ENCODE measurements at regions of chr1 and their contacts with region 1.

Region 1: DNA sequence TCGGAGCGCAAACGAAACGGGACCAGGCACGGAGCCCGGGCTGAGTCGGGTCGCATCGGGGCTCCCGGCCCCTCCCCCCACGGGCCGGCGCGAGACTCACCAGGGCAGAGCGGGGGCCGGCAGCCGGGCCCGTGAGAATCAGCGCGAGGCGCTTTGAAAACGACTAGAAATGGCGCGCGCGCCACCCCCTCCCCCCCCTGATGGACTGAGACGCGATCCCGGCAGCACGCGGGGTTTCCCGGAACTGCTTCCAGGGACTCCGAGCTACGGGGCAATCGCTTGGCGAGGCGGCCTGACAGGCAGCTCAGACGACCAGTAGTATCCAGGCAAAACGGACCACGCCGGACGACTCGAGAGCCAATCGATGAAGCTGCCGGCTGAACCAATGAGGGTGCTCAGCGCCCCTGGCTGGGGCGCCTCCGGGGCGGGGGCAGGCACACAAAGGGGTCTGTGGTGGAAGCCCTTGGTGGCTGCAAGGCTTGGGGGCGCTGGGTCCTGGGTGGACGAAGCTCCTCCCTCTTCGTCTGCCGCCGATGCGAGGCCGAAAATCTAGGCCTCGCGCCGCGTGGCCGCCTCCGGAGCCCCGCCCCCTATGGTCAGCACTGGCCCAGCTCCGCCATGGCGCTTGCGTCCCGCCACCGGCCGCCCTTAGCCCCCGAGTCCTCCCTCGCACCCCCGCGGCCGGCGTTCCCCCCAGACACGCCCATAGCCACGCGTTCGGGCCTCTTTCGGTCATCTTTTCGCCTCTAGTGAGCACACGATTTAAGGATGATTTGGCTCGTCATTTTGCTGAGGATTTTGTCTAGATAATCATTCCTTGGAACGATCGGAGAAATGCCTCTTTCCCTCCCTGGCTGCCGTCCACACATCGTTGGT is at the start of gene HNRNPR:
- DNase-seq: peak; percentile 98 to 100
- H3K4me3 ChIP-seq: peak within 1 kb of the TSS; percentile 94 to 95
- H3K27ac ChIP-seq: peak within 1 kb of the TSS; percentile 97 to 100
- H3K4me1 ChIP-seq: peaks cover 10 to 26% of the 10 kb centered on the region in 2 donors
- H3K27me3 ChIP-seq: no peaks in the 10 kb centered on the region
- CTCF ChIP-seq: peak in 1 of 3 experiments; percentile 7
- total RNA-seq, gene HNRNPR: 21.5 TPM

Region 2: DNA sequence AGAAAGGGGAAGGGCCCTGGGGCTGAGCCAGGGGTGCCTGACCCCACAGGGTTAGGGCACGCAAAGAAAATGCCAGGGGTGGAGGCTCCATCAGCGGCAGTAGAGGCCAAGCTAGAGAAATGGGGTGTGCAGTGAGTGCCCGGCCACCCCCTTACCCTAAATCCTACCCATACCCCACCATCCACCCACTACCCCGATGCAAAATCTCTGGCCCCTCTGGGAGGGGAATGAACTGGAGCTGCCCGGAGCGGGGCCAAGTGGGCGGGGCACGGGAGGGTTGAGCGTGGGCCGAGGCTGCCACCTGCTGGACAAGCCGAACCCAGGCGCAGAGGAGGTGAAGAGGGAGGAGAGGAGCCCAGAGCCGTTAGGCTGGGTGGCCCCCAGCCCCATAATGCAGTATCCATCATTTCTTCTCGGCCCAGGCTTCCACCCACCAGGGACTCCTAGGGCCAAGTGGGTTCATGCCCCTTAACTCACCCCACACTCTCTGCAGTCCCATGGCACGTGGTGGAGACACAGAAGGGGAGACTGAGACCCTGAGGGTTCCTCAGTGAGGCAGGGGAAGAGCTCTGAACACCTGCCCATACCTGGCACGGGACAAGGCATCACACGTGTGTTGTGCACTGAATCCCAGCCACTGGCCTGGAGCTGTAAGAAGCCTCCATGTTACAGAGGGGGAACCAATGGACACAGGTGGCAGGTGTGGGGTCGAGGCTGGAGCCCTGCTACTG is 702.3 kb before region 1 on chr1:
- intact Hi-C with region 1: no loop called
- DNase-seq: peak in 1 of 2 donors; percentile 83
- H3K4me3 ChIP-seq: no peak overlapping the region
- H3K27ac ChIP-seq: no peak overlapping the region
- H3K4me1 ChIP-seq: no peaks in the 10 kb centered on the region
- H3K27me3 ChIP-seq: no peaks in the 10 kb centered on the region
- CTCF ChIP-seq: peak; percentile 83 to 94 (median 93)

Region 3: DNA sequence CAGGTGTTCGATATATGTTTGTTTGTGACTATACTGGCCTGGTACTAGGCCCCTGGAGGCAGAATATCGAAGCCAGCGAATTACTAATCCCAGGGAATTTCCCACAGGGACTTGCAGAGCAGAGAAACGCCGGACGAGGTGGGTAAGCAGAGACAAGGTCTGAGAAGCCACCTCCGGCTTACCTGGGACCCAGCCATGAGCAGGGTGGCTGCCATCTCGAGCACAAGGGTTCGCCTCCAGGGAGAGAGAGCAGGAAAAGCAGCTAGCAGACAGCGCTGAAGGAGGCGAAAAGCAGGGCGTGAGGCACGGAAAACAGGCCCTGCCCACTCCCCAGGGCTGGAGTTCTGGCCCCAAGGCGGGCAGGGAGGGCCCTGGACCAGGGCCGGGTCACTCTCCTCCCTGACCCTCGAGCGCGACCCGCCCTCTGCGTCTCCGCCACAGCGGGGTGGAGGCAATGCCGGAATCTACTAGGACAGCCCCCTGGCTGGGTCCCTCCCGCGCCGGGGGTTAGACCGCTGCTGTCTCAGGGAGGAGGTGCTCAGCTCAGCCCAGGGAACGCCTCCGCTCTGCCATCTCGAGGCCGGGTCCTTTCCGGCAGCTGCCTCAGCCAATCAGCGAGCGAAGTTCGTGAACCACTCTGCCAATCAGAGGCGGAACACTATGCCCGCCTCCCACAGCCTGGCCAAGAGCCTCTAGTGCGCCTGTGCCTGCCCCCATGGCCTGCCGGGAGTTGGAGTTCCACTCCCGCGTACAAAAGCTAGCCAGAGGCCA is 23.6 kb after region 1 on chr1:
- intact Hi-C with region 1: loop called (anchors 1 kb)
- DNase-seq: peak; percentile 96 to 99
- H3K4me3 ChIP-seq: peak overlapping the region; percentile 76 to 78
- H3K27ac ChIP-seq: peak overlapping the region; percentile 98
- H3K4me1 ChIP-seq: peaks cover 9 to 26% of the 10 kb centered on the region in 2 donors
- H3K27me3 ChIP-seq: no peaks in the 10 kb centered on the region
- CTCF ChIP-seq: no peak

Region 4: DNA sequence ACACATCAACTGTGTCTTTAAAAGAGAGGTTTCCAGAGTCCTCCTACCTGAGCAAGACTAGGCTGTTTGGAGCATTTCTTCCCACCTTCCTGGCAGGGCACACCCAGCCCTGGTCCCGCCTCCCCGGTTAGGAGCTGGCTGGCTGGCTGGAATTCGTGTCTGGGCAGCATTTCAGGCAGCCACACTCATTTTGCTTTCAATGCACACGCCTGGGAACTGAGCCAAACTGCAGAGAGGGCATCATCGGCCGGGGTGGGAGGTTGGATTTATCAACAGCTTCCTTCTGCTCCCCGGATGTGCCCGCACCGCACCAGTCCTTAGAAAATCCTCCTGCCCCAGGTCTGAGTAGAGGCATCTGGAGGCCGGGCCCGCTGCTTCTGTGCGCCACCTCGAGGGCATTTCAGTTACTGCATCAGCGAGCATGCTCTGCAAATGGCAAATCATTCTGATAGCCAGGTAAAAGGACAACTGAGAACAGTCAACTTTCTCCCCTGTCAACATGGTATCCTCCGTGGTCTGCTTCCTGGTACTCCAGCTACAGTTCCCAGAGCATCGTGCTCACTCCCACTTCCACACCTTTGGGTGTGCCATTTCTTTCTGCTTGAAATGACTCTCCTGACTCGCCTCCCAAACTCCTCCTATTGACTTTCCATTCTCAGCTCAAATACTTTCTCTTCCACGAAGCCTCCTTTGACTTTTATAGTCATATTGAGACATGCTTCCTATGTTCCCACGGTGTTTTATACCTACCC is 59.6 kb after region 1 on chr1:
- intact Hi-C with region 1: loop called (anchors 1 kb)
- DNase-seq: peak; percentile 53 to 92
- H3K4me3 ChIP-seq: peak overlapping the region in 1 of 2 donors; percentile 39
- H3K27ac ChIP-seq: peak overlapping the region; percentile 47 to 68
- H3K4me1 ChIP-seq: peaks cover 3 to 16% of the 10 kb centered on the region in 2 donors
- H3K27me3 ChIP-seq: no peaks in the 10 kb centered on the region
- CTCF ChIP-seq: peak; percentile 88 to 98 (median 98)

Region 5: GRCh38 chr1:23422241-23423030 is 78.1 kb after region 1 on chr1:
- intact Hi-C with region 1: loop called (anchors 5 kb)
- DNase-seq: peak; percentile 39 to 86
- H3K4me3 ChIP-seq: peak overlapping the region; percentile 30 to 91
- H3K27ac ChIP-seq: peak overlapping the region; percentile 85 to 86
- H3K4me1 ChIP-seq: peaks cover 0 to 23% of the 10 kb centered on the region in 2 donors
- H3K27me3 ChIP-seq: no peaks in the 10 kb centered on the region
- CTCF ChIP-seq: no peak

Region 6: DNA sequence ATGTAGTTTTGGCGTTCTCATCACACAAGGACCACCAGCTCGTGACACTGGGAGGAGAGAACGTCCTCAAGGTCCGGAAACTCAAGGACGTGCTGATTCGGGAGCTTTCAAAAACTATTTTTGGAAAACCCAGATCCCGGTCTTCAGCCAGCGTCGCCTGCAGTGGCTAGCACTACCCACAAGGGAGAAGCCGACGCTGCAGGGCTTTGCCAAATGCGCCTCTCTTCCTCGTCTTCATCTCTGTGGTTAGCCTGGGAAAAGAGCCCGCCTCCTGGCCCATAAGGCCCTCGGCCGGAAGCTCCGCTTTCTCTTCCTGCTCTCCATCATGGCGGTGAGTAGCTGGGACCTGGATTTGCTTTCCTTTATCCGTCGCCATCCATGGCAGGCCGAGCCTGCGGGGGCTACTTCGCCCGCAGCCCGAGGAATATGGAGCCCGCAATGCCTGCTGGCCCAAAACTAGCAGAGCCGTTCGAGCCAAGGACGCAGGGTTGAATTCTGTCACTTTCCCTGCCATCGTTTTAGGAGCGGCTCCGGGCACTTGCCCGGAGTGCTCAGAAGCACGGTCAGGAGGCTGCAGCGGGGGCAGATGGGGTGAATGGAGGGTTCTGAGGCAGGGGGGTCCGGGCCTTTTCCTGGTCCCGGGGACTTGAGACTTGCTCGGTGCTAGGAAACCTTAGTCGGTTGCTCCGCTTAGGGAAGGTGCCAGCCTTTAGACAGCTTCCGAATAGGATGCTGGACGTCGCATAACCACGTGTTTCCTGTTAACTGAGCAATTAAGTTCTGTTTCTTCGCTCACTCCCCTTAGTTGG is 347.4 kb after region 1 on chr1 and contains the start of gene RPL11:
- intact Hi-C with region 1: loop called (anchors 5 kb)
- DNase-seq: peak; percentile 65 to 96
- H3K4me3 ChIP-seq: peak within 1 kb of the TSS; percentile 74 to 82
- H3K27ac ChIP-seq: peak within 1 kb of the TSS; percentile 80 to 88
- H3K4me1 ChIP-seq: peaks cover 8 to 17% of the 10 kb centered on the region in 2 donors
- H3K27me3 ChIP-seq: no peaks in the 10 kb centered on the region
- CTCF ChIP-seq: peak; percentile 76 to 88 (median 84)
- total RNA-seq, gene RPL11: 462 TPM

Measured in ascending aorta (tissue), 2 donors.